Activated CD4-positive, alpha-beta T cell treated with anti-CD3 and anti-CD28 coated beads, Interleukin-2, amount 10 ng/mL, durations not matched to agents 24 days and 14 days (primary cell): ENCODE measurements at regions of chr6 and their contacts with region 1.

Region 1: DNA sequence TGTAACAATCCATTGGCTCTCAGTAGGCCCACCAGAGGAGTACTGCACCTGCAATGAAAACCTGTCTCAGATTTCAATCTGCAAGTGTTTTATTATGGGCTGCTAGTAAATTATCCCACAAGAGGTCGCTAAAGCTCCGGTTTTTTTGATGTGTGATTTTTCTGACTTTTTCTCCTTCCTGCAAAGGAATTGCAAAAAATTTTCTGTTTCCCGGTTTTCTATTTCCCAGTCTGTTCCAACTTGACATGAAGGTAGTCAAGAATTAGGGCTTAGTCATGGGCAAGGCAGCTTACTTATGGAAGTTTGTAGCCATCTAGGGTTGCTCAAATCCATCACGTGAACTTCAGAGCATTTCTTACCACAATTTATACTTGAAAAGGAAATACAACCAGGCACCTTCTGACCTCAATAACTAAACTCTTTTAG is 38.5 kb upstream of the AHI1 start:
- DNase-seq: peak; percentile 82
- H3K4me3 Mint-ChIP-seq: peak overlapping the region; percentile 66
- H3K27ac Mint-ChIP-seq: peak overlapping the region; percentile 81
- H3K4me1 Mint-ChIP-seq: peaks cover 36% of the 10 kb centered on the region
- H3K27me3 Mint-ChIP-seq: no peaks in the 10 kb centered on the region

Region 2: GRCh38 chr6:135555550-135555949 is 19.5 kb after region 1 on chr6:
- intact Hi-C with region 1: loop called (anchors 2 kb)
- DNase-seq: no peak
- H3K4me3 Mint-ChIP-seq: no peak overlapping the region
- H3K27ac Mint-ChIP-seq: no peak overlapping the region
- H3K4me1 Mint-ChIP-seq: peaks cover 30% of the 10 kb centered on the region
- H3K27me3 Mint-ChIP-seq: no peaks in the 10 kb centered on the region

Region 3: DNA sequence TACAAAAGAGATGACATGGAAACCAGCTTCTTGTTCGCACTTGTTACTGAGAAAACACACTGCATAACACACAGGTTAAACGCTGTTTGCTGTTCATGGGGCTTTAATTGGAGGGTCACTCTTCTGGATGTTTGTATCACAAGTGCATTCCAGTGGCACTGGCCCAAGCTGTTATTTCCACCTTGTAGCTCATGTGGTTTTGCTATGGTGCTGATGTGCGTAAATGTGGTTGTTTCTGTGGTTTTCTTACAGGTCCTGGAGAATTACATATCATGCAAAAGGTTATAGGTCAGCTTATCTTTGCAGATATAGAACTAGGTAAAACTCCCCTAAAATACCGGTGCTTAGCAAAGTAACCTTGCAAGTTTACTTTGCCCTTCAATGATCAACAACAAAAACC is 50.8 kb after region 1 on chr6:
- intact Hi-C with region 1: loop called (anchors 1 kb)
- DNase-seq: peak; percentile 89
- H3K4me3 Mint-ChIP-seq: peak overlapping the region; percentile 34
- H3K27ac Mint-ChIP-seq: peak overlapping the region; percentile 97
- H3K4me1 Mint-ChIP-seq: peaks cover 70% of the 10 kb centered on the region
- H3K27me3 Mint-ChIP-seq: no peaks in the 10 kb centered on the region

Region 4: GRCh38 chr6:135647521-135647920 is 111.5 kb after region 1 on chr6:
- intact Hi-C with region 1: loop called (anchors 1 kb)
- DNase-seq: no peak
- H3K4me3 Mint-ChIP-seq: peak overlapping the region; percentile 86
- H3K27ac Mint-ChIP-seq: peak overlapping the region; percentile 98
- H3K4me1 Mint-ChIP-seq: peaks cover 52% of the 10 kb centered on the region
- H3K27me3 Mint-ChIP-seq: no peaks in the 10 kb centered on the region

Region 5: DNA sequence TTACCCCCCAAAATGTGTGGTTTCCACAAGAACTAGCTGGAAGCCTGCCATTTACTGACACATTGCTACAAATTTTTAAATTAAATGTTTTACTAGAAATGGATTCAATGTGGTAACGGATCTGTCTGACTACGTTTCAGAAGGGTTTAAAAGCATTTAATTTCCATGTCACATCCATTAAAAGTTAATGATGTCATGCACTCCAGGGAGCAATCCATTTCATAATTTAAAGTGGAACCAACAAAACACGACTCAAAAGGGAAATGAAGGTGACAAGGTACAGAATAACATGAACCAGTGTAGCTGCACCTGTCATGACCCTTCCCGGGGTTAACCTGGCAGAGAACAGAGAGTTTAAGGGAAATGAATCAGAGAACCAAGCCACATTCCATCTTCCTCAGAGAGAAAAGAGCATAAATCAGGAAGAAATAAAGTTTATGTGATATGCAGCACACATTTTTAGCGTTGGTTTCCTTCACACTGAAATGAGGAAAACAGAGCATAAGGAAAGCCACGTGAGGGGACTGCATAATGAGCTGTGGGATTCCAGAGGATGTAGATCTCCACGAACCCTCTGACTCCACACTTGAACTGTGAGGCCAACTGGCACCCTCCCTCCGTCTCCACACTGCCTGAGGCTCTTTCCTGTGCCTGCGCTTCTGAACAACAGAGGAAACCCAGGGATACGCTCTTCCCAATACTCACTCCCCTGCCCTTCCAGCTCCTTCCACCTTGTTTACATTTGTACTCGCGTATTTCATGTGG is 131.9 kb after region 1 on chr6:
- intact Hi-C with region 1: no loop called
- DNase-seq: no peak
- H3K4me3 Mint-ChIP-seq: no peak overlapping the region
- H3K27ac Mint-ChIP-seq: no peak overlapping the region
- H3K4me1 Mint-ChIP-seq: peaks cover 16% of the 10 kb centered on the region
- H3K27me3 Mint-ChIP-seq: no peaks in the 10 kb centered on the region

Region 6: GRCh38 chr6:135901774-135902524 is 365.9 kb after region 1 on chr6:
- intact Hi-C with region 1: loop called (anchors 2 kb)
- DNase-seq: peak; percentile 65
- H3K4me3 Mint-ChIP-seq: peak overlapping the region; percentile 66
- H3K27ac Mint-ChIP-seq: peak overlapping the region; percentile 84
- H3K4me1 Mint-ChIP-seq: peaks cover 49% of the 10 kb centered on the region
- H3K27me3 Mint-ChIP-seq: no peaks in the 10 kb centered on the region